OCI-LY7 (cell line): ENCODE measurements at regions of chrX and their contacts with region 1.

Region 1: DNA sequence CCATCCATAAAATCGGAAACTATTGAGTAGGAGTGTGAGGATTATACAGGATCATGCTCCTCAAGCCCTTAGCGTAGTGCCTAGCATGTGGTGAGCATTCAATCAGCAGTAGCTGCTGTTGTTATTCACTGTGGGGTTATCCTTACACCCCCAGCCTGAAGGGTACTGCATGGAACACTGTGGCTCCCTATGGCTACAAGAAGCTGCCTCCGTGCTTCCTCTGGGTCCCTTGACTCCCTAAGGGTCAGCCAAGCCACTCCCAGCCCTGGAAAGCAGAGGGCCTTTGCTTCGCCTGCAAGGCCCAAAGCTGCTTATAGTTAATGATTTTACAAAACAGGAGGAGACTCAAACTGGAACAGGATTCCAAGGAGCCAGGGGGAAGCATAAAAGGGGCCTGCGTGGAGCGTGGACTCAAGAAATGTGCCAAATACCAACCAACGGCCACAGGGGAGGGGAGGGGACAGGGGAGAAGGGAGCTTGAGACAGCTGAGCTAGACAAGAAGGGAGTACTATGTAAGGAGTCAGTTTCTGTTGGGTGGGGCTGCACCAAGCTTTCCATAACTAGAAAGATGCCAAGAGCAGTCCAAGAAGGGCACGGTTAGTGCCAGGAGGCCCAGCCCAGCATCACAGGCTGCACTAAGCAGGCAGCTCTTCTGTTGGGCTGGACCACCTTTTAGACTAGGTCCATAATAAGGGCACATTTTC is 15.9 kb downstream of the SEPTIN6 start:
- DNase-seq: no peak
- H3K4me3 ChIP-seq: peak overlapping the region; percentile 54
- H3K27ac ChIP-seq: peak overlapping the region; percentile 92
- H3K4me1 ChIP-seq: peaks cover 70% of the 10 kb centered on the region
- CTCF ChIP-seq: no peak

Region 2: GRCh38 chrX:119625843-119626242 is 51.3 kb before region 1 on chrX:
- CTCF ChIA-PET with region 1: no interaction called
- POLR2A ChIA-PET with region 1: no interaction called
- intact Hi-C with region 1: no loop called
- DNase-seq: no peak
- H3K4me3 ChIP-seq: no peak overlapping the region
- H3K27ac ChIP-seq: no peak overlapping the region
- H3K4me1 ChIP-seq: peaks cover 5% of the 10 kb centered on the region
- CTCF ChIP-seq: no peak

Region 3: GRCh38 chrX:119693040-119693995 is 16.2 kb after region 1 on chrX and contains the start of gene SEPTIN6:
- CTCF ChIA-PET with region 1: interaction called, 6 read pairs
- POLR2A ChIA-PET with region 1: interaction called, 34 read pairs
- intact Hi-C with region 1: loop called (anchors 1 kb)
- DNase-seq: peak; percentile 90
- H3K4me3 ChIP-seq: peak within 1 kb of the TSS; percentile 94
- H3K27ac ChIP-seq: peak within 1 kb of the TSS; percentile 73
- H3K4me1 ChIP-seq: peaks cover 66% of the 10 kb centered on the region
- CTCF ChIP-seq: no peak
- total RNA-seq, gene SEPTIN6: 145 and 182 TPM in 2 replicates